Ascending aorta (tissue), 2 donors: ENCODE measurements at regions of chr18 and their contacts with region 1.

Region 1: DNA sequence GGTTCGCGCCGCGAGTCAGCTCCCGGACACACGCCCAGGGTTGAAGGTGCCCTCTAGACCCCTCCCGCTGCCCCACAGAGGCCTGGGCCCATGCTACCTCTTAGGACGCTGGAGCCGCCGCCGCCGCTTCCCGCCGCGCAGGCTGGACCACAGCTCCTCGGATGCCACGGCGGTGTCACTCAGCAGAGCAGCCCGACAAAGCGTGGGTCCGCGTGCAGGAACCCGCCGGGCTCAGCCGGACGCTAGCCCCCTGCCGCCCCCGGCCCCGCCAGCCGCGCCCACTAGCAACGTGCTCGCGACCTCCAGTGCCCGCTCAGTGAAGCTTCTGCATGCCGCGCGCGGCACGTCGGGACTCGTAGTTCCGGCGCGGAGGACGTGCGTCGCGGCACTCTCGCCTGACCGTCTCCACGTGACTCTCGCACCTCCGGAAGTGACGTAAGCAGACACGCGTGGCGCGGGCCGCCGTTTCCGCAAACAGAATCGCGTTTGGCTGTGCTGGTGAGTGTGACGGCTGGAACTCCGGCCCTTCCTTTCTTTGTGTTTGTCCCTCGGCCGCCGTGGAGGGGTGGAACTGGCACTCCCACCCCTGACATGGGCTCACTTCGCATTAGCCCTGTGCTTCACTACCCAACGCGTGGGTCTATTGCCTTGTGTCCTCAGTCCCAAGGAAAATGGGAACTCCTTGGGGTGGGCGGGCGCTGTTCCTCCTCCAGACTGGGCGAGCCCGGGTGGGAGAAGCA is at the starts of genes FAM210A and RNMT:
- DNase-seq: peak; percentile 87 to 97
- H3K4me3 ChIP-seq: peak within 1 kb of the TSS; percentile 79 to 89
- H3K27ac ChIP-seq: peak within 1 kb of the TSS; percentile 95 to 96
- H3K4me1 ChIP-seq: peaks cover 0 to 13% of the 10 kb centered on the region in 2 donors
- H3K27me3 ChIP-seq: no peaks in the 10 kb centered on the region
- CTCF ChIP-seq: peak in 1 of 3 experiments; percentile 35
- total RNA-seq, gene FAM210A: 2.1 TPM
- total RNA-seq, gene RNMT: 6.4 TPM

Region 2: DNA sequence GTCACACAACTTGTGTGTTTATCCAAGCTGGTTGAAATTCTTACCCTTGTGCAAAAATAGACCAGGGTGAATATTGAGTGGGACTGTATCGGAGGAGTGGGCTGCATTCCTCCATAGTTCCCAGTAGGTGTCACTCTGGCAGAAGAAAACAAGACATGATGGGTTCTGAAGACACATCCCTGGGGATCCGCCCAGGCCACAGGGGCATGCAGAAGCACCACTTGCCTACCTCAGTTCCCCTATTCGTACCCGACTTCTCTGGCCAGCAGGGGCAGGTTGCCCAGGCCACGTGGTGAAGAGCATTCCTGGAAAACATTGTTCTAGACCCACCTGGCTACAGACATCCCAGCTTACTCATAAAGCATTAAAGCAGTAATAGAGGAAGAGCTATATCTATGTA is 168.3 kb before region 1 on chr18:
- intact Hi-C with region 1: loop called (anchors 5 kb)
- DNase-seq: no peak
- H3K4me3 ChIP-seq: no peak overlapping the region
- H3K27ac ChIP-seq: no peak overlapping the region
- H3K4me1 ChIP-seq: peaks cover 2 to 8% of the 10 kb centered on the region in 2 donors
- H3K27me3 ChIP-seq: no peaks in the 10 kb centered on the region
- CTCF ChIP-seq: peak; percentile 27 to 57 (median 32)

Region 3: DNA sequence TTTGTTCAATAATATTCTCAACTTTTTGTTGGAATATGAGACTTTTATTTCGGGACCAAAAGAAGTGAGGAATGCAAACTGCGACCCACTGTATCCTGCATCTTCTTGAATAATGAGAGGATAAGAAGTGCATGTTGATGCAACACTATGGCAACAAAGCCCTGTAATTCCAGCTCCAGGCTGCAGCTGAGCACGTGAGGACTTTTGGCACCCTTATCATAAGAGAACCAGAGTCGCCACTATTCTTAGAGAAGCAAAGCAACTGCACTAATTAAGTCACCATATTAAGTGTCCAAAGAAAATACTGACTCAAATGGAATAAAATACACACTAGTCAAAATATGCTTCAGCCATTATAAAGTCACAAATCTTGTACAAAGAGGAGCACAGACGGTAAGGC is 65.9 kb before region 1 on chr18:
- intact Hi-C with region 1: loop called (anchors 5 kb)
- DNase-seq: no peak
- H3K4me3 ChIP-seq: no peak overlapping the region
- H3K27ac ChIP-seq: no peak overlapping the region
- H3K4me1 ChIP-seq: peaks cover 0 to 17% of the 10 kb centered on the region in 2 donors
- H3K27me3 ChIP-seq: no peaks in the 10 kb centered on the region
- CTCF ChIP-seq: no peak